Transverse colon (tissue), 4 donors: ENCODE measurements at regions of chr10 and their contacts with region 1.

Region 1: DNA sequence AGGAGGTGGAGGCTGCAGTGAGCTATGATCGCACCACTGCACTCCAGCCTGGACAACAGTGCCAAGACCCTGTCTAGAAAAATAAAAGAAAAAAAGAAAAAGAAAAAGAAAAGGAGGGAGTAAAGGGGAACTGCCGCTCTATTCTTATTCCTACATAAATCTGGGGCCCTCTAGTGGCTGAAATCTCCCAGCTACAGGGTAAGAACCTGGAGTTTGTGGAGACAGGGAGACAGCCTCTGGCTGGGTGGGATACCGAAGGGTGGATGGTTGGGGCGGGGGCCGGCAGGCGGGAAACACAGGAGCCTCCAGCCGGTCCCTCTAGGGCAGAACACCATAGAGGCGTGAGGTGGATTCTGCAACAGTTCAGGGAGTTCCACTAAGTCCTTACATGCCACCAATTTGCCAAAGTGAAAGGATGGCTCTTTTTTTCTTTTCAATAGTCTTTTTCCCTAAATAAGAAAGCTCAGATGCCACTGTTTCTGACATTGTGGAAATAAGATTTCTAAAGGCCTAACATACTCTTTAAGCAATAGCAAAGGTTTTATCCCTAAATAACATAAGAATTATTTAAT is 117.3 kb downstream of the SVIL start:
- DNase-seq: peak; percentile 26
- H3K4me3 ChIP-seq: no peak overlapping the region
- H3K27ac ChIP-seq: peak overlapping the region; percentile 0 to 77 (median 44)
- H3K4me1 ChIP-seq: peaks cover 0 to 21% (median 2%) of the 10 kb centered on the region in 4 donors
- H3K27me3 ChIP-seq: no peaks in the 10 kb centered on the region
- CTCF ChIP-seq: peak; percentile 29 to 56 (median 45)
- EP300 ChIP-seq: no peak
- POLR2A ChIP-seq: no peak

Region 2: DNA sequence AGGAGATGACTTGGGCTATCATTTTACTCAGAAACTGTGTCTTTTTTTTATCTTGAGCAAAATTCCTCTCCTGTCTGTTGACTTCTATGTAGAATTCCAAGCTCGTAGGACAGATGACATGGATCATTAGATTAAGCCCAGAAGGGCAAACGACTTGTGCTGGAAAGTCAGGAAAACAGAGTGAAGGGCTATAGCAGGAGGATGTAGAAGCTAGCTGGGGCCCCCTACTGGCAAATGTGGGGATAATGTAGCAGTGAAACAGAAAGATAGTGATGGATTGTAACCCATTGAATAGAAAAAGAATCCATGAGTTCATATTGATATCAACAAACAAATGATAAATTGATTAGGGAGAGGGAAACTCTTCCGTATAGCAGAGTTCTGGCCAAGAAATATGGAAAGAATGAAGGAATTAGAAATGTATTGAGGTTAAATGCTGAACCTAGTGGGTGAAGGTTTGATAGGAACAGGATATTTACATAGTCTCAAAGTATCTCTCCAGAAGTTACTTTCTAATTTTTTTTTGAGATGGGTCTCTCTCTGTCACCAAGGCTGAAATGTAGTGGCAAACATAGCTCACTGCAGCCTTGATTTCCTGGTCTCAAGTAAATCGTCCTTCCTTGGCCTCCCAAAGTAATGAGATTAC is 124.9 kb before region 1 on chr10:
- in situ Hi-C with region 1: no loop called
- intact Hi-C with region 1: no loop called
- DNase-seq: peak; percentile 33
- H3K4me3 ChIP-seq: no peak overlapping the region
- H3K27ac ChIP-seq: no peak overlapping the region
- H3K4me1 ChIP-seq: no peaks in the 10 kb centered on the region
- H3K27me3 ChIP-seq: no peaks in the 10 kb centered on the region
- CTCF ChIP-seq: peak; percentile 54 to 76 (median 73)
- EP300 ChIP-seq: no peak
- POLR2A ChIP-seq: no peak

Region 3: DNA sequence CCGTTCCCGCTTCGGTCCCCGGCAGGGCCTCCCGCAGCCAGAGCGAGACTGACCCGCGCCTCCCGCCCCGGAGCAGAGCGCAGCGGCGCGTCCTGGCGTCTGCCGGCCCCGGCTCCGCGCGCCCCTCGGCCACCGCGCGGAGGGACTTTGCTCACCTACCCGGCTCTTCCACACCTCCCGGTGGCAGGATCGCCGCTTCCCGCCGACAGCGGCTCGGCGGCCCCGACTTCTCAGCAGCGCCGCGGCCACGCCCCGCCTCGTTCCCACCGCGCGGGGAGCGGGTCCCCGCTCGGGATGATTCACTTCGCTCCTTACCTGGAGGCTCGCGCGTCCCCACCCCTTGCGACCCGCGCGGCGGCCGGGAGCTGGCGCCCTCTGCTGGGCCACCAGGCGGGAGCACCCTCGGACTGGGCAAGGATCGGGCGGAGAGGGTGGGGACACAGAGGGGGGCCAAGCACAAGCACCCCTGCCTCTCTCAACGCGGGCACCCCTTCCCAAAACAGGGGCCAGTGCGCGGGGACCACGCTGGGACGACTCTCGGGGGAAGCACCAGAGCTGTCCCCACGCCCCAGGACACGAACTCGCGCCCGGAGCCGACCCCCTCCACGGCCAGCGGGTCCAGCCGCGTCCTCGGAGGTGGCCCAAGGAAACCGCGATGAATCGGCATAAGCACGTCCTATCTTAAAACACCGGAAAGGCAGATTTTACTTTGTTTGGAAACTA is 218.3 kb after region 1 on chr10:
- in situ Hi-C with region 1: loop called in 1 of 4 experiments (anchors 25 kb)
- intact Hi-C with region 1: no loop called
- DNase-seq: peak; percentile 92
- H3K4me3 ChIP-seq: peak overlapping the region; percentile 66 to 96 (median 84)
- H3K27ac ChIP-seq: peak overlapping the region; percentile 95 to 99 (median 96)
- H3K4me1 ChIP-seq: peaks cover 5 to 45% (median 16%) of the 10 kb centered on the region in 4 donors
- H3K27me3 ChIP-seq: no peaks in the 10 kb centered on the region
- CTCF ChIP-seq: peak; percentile 89 to 98 (median 95)
- EP300 ChIP-seq: no peak
- POLR2A ChIP-seq: peak; percentile 67

Region 4: GRCh38 chr10:30671026-30671616 is 1153.7 kb after region 1 on chr10:
- in situ Hi-C with region 1: loop called in 2 of 4 experiments (anchors 10 kb)
- intact Hi-C with region 1: no loop called
- DNase-seq: peak; percentile 14
- H3K4me3 ChIP-seq: peak overlapping the region in 1 of 4 donors; percentile 36
- H3K27ac ChIP-seq: no peak overlapping the region
- H3K4me1 ChIP-seq: peaks cover 0 to 6% (median 0%) of the 10 kb centered on the region in 4 donors
- H3K27me3 ChIP-seq: no peaks in the 10 kb centered on the region
- CTCF ChIP-seq: peak; percentile 61 to 79 (median 72)
- EP300 ChIP-seq: no peak
- POLR2A ChIP-seq: no peak